Vagina (tissue), 2 donors: ENCODE measurements at regions of chr1 and their contacts with region 1.

Region 1: DNA sequence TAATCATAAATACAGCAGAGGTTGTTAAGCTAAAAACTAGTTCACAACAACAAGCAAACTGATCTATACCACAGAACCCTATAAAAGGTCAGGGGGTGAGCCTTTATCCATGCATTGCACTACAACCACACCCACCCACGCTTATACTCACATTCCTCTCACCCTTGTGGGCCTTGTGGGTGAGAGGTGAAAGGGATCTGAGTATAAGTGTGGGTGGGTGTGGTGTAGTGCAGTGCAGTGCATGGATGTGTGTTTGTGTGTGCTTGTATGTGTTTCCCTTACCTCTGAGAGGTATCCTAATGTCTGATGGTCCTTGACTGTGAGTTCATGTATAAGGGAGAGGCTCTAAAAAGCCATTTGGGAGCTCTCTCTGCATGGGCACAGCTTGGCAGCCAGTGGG is 95.4 kb upstream of the DPT start:
- DNase-seq: no peak
- H3K4me3 ChIP-seq: no peak overlapping the region
- H3K27ac ChIP-seq: no peak overlapping the region
- H3K4me1 ChIP-seq: no peaks in the 10 kb centered on the region
- H3K27me3 ChIP-seq: no peaks in the 10 kb centered on the region
- CTCF ChIP-seq: no peak
- POLR2A ChIP-seq: no peak

Region 2: DNA sequence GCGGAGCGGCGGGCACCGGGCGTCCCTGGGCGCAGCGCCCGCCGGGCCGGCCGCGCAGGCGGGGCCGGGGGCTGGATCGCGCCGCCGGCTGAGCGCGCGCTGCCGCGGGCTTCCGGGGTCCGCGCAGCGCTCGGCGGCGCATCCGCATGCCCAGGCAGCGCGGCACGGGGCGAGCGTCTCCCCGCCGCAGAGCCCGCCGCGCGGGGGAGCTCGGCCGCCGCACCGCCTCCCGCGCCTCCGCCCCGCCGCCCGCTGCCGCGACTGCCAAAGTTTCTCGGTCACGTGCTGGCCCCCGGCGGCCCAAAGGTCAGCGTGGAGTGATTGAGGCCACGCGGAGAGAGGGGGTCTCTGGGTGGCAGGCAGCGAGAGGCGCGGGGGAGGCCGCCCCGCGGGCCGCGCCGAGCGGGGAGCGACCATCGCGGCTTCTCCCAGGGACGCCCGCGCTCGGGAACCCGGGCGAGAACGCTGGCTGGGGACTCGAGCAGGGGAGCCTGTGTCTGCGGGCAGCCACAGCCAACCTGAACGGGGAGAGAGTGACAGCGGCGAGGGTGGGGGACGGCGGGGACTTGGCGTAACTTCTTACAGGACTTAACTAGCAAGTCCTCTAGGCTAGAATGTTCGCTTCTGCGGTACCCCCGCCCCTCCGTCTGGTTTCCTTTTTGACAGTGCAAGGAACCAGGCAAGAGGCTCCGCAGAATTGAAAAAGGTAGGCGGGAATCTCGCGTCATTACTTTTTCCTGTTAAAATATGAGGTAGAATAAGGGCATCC is 1848.9 kb before region 1 on chr1 and contains the start of gene ILDR2:
- intact Hi-C with region 1: no loop called
- DNase-seq: no peak
- H3K4me3 ChIP-seq: peak within 1 kb of the TSS; percentile 68 to 83
- H3K27ac ChIP-seq: peak within 1 kb of the TSS; percentile 48
- H3K4me1 ChIP-seq: peaks cover 6% of the 10 kb centered on the region
- H3K27me3 ChIP-seq: no peaks in the 10 kb centered on the region
- CTCF ChIP-seq: no peak
- POLR2A ChIP-seq: no peak
- total RNA-seq, gene ILDR2: 0.25 TPM

Region 3: GRCh38 chr1:168903237-168903830 is 78.9 kb after region 1 on chr1:
- intact Hi-C with region 1: no loop called
- DNase-seq: no peak
- H3K4me3 ChIP-seq: no peak overlapping the region
- H3K27ac ChIP-seq: no peak overlapping the region
- H3K4me1 ChIP-seq: no peaks in the 10 kb centered on the region
- H3K27me3 ChIP-seq: no peaks in the 10 kb centered on the region
- CTCF ChIP-seq: no peak
- POLR2A ChIP-seq: no peak

Region 4: GRCh38 chr1:169867012-169867675 is 1042.7 kb after region 1 on chr1:
- intact Hi-C with region 1: loop called (anchors 5 kb)
- DNase-seq: no peak
- H3K4me3 ChIP-seq: no peak overlapping the region
- H3K27ac ChIP-seq: no peak overlapping the region
- H3K4me1 ChIP-seq: no peaks in the 10 kb centered on the region
- H3K27me3 ChIP-seq: no peaks in the 10 kb centered on the region
- CTCF ChIP-seq: no peak
- POLR2A ChIP-seq: no peak